K562 (cell line): ENCODE measurements at regions of chr17 and their contacts with region 1.

Region 1: DNA sequence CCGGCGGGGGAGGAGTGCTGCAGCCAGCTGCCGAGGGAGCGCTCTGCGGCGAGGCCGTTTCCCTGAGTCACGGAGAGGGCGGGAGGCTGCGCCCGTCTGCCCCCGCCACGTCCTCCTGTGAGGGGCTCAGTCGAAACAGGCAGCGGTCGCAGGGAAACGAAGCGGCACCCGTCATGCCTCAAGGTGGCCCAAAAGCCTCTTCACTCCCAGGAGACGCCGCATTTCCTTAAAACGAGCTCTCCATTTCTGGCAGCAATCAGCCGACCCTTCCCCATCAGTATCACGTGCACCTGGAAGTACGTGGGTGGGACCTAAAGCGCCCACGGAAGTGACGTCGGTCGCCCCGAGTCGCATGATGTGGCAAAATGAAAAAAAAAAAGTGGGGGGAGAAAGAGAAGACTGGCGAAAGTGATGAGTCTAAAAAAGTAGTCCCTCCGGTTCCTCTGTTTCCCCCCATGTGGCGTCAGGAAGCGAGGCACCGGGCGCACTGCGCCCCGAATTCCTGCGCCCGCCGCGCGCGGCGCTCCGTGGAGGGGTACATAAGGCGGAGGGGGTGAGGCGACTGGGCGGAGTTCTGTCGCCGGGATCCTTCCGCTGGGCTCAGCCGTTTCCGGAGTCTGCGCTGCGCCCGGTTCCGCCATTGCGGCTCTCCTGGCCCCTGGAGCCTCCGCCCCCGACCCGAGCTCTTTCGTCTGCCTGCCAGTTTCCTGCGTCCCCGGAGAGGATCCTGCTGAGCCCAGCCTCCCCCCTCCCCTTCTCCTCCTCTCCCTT is at the start of gene CLTC:
- DNase-seq: peak; percentile 84 to 96 (median 86)
- ATAC-seq: peak; percentile 87
- H3K4me3 ChIP-seq: peak within 1 kb of the TSS; percentile 97
- H3K27ac ChIP-seq: peak within 1 kb of the TSS; percentile 98
- H3K4me1 ChIP-seq: peaks cover 7 to 22% of the 10 kb centered on the region in 2 experiments; a peak in 4 of 5 replicates
- H3K27me3 ChIP-seq: no peaks in the 10 kb centered on the region
- CTCF ChIP-seq: no peak; a peak in 1 of 6 replicates
- EP300 ChIP-seq: peak; percentile 67
- POLR2A ChIP-seq: peak; percentile 98
- RAD21 ChIP-seq: peak in 1 of 2 experiments; percentile 19; a peak in 3 of 4 replicates
- polyA plus RNA-seq, gene CLTC: 122 to 134 TPM

Region 2: DNA sequence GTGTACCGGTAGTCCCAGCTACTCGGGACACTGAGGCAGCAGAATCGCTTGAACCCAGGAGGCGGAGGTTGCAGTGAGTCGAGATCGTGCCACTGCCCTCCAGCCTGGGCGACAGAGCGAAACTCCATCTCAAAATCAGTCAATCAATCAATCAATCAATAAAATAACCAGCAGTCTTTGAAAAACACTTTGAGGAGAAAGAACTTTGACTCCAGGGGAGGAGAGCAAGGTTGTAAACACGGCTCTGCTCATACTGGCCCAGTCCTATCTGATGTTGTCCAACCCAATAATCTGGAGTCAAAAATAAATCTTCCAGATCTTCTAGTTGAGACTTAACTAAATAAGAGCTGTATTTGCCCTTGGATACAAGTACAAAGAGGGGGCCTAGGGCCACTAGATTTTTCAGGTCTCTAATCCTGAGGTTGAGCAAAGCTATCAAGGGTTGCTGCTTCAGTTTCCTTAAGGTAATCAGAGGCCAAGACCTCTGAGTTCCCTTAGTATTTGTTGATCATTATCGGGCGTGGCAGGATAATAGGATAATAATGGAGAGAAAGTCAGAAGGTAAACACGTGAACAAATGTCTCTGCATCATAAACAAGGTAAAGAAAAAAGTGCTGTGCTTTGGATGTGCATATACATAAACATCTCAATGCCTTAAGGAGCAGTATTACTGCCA is 329.7 kb before region 1 on chr17:
- CTCF ChIA-PET with region 1: no interaction called
- POLR2A ChIA-PET with region 1: no interaction called
- in situ Hi-C with region 1: no loop called
- intact Hi-C with region 1: loop called (anchors 1 kb)
- DNase-seq: peak in 3 of 4 experiments; percentile 17 to 22 (median 17)
- ATAC-seq: peak; percentile 62
- H3K4me3 ChIP-seq: peak overlapping the region; percentile 8; the same call in 1 of the 2 replicates
- H3K27ac ChIP-seq: peak overlapping the region; percentile 97
- H3K4me1 ChIP-seq: peaks cover 29 to 31% of the 10 kb centered on the region in 2 experiments
- H3K27me3 ChIP-seq: no peaks in the 10 kb centered on the region
- CTCF ChIP-seq: no peak
- EP300 ChIP-seq: no peak
- POLR2A ChIP-seq: no peak
- RAD21 ChIP-seq: no peak

Region 3: GRCh38 chr17:59521204-59522126 is 98.0 kb before region 1 on chr17:
- CTCF ChIA-PET with region 1: no interaction called
- POLR2A ChIA-PET with region 1: interaction called, 5 read pairs
- in situ Hi-C with region 1: no loop called
- intact Hi-C with region 1: loop called (anchors 5 kb)
- DNase-seq: peak; percentile 73 to 91 (median 88)
- ATAC-seq: peak; percentile 95
- H3K4me3 ChIP-seq: no peak overlapping the region
- H3K27ac ChIP-seq: no peak overlapping the region
- H3K4me1 ChIP-seq: peaks cover 0 to 7% of the 10 kb centered on the region in 2 experiments; a peak in 2 of 5 replicates
- H3K27me3 ChIP-seq: peaks cover 0 to 2% of the 10 kb centered on the region in 2 experiments; a peak in 1 of 5 replicates
- CTCF ChIP-seq: peak; percentile 81 to 95 (median 90)
- EP300 ChIP-seq: no peak
- POLR2A ChIP-seq: no peak
- RAD21 ChIP-seq: peak; percentile 85 to 92

Region 4: GRCh38 chr17:59565171-59565969 is 54.1 kb before region 1 on chr17 and contains the start of gene DHX40:
- CTCF ChIA-PET with region 1: no interaction called
- POLR2A ChIA-PET with region 1: interaction called, 15 read pairs
- in situ Hi-C with region 1: no loop called
- intact Hi-C with region 1: loop called (anchors 2 kb)
- DNase-seq: peak; percentile 96 to 98 (median 97)
- ATAC-seq: peak; percentile 93
- H3K4me3 ChIP-seq: peak within 1 kb of the TSS; percentile 93
- H3K27ac ChIP-seq: peak within 1 kb of the TSS; percentile 69
- H3K4me1 ChIP-seq: peaks cover 5 to 7% of the 10 kb centered on the region in 2 experiments; a peak in 3 of 5 replicates
- H3K27me3 ChIP-seq: no peaks in the 10 kb centered on the region
- CTCF ChIP-seq: no peak; a peak in 1 of 6 replicates
- EP300 ChIP-seq: no peak; the same call in 1 of the 2 replicates
- POLR2A ChIP-seq: peak; percentile 78
- RAD21 ChIP-seq: no peak
- polyA plus RNA-seq, gene DHX40: 7.2 to 7.3 TPM

Region 5: DNA sequence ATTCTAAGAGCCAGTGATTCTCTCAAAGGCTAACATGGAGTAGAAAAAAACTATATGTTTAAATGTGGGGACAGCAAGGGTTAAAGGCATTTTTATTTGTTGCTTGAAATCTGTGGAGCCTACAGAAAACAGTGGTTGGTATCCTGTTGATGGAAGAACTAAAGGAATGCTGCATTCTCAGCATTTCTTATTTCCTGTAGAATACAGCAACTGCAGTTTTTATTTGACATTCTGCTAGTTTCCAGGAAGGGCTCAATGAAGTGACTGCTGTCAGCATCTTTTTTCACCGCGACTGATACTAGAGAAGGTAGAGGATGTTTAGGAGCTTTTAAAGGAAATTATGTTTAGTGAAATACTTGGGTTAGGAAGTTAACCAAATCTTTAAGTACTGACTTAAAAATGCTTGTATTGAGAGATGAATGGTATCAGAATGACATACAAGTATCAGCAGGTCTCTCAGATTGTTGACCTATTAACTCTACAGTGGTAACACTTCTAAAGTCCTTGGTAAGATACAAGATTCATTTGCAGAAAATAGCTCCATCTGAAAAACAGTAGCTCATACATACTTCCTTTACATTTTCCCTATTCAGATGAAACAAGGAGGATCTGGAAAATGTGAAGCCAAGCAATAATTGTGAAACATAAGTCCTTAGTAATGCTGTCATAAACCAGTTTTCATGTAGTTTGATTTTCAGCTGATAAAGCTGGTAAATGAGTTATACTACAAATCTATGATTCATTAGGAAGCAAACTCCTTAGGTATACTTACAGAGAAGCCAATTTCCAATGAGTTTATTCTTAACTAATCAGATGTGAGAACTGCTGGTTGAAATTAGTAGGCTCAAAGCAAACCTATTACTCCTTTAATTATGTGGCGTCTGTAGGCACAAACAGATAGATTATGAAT is 15.4 kb after region 1 on chr17:
- CTCF ChIA-PET with region 1: no interaction called
- POLR2A ChIA-PET with region 1: interaction called, 45 read pairs
- in situ Hi-C with region 1: no loop called
- intact Hi-C with region 1: no loop called
- DNase-seq: no peak
- ATAC-seq: no peak
- H3K4me3 ChIP-seq: no peak overlapping the region
- H3K27ac ChIP-seq: no peak overlapping the region
- H3K4me1 ChIP-seq: peaks cover 11 to 12% of the 10 kb centered on the region in 2 experiments; a peak in 4 of 5 replicates
- H3K27me3 ChIP-seq: no peaks in the 10 kb centered on the region
- CTCF ChIP-seq: no peak
- EP300 ChIP-seq: no peak
- POLR2A ChIP-seq: no peak
- RAD21 ChIP-seq: no peak

Region 6: DNA sequence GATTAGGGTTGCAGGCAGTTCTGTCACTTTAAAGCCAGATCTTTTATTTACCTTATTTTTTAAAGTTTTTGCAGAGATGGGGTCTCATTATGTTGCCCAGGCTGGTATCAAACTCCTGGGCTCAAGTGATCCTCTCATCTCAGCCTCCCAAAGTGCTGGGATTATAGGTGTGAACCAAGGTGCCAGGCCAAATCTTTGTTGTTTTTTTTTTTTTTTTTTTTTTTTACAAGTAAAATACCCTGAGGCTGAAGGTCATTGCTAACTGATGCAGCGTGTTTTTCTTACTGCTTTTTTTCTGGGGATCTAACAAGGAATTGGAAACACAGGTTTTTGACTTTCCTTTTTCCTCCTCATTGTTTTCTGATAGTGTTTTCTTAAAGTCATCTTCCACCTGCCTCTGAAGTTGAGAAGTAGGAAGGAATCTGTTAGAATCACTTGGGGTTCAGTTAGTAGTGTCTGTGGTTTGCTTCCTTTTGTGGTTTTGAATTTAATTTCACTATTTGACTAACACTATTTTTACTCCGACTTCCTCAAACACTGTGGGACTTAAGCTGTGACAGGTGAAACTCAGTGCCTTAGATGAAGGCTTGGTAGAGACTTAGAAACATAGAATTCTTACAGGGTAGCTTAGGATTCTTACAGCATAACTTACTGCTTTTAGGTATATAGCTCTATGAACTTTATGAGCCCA is 22.5 kb after region 1 on chr17:
- CTCF ChIA-PET with region 1: no interaction called
- POLR2A ChIA-PET with region 1: interaction called, 12 read pairs
- in situ Hi-C with region 1: no loop called
- intact Hi-C with region 1: no loop called
- DNase-seq: no peak
- ATAC-seq: 0 out of 3 replicates have a peak, but pooled peaks have one; percentile 17
- H3K4me3 ChIP-seq: no peak overlapping the region
- H3K27ac ChIP-seq: no peak overlapping the region
- H3K4me1 ChIP-seq: peaks cover 3 to 7% of the 10 kb centered on the region in 2 experiments
- H3K27me3 ChIP-seq: no peaks in the 10 kb centered on the region
- CTCF ChIP-seq: no peak
- EP300 ChIP-seq: no peak
- POLR2A ChIP-seq: no peak
- RAD21 ChIP-seq: no peak